Activated CD4-positive, alpha-beta T cell treated with anti-CD3 and anti-CD28 coated beads for 36 hours (primary cell): ENCODE measurements at regions of chr6 and their contacts with region 1.

Region 1: DNA sequence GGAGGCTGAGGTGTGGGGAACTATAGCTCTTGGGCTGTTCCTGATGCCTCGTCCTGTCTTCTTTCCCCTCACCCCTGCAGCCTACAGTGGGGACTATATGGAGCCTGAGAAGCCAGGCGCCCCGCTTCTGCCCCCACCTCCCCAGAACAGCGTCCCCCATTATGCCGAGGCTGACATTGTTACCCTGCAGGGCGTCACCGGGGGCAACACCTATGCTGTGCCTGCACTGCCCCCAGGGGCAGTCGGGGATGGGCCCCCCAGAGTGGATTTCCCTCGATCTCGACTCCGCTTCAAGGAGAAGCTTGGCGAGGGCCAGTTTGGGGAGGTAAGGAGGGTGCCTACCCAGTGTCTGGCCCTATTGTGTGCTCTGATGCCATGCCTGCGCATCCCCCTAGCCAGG is 11.5 kb upstream of the GTF2H4 start:
- DNase-seq: no peak
- ATAC-seq: no peak
- H3K4me3 Mint-ChIP-seq: no peak overlapping the region
- H3K27ac Mint-ChIP-seq: no peak overlapping the region
- H3K4me1 Mint-ChIP-seq: peaks cover 3% of the 10 kb centered on the region
- H3K27me3 Mint-ChIP-seq: no peaks in the 10 kb centered on the region

Region 2: DNA sequence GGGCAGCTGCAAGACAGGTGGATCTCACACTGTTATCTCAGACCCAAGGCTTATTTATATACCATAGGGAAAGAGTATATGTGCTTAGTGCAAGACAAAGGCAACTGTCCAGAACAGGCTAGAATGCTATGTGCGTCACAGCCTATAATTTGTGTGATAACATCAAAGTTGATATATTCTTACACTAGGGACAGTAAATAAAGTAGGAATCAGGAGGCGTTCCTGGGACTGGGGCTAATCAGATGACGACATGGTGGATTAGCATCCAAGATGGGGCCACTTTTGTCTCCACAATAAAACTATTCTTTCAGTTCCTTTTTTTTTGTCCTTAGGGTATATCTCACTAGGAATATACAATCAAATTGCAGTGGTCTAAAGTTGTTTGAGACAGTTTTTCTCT is 97.3 kb before region 1 on chr6:
- CTCF ChIA-PET with region 1: no interaction called
- POLR2A ChIA-PET with region 1: no interaction called
- intact Hi-C with region 1: no loop called
- DNase-seq: no peak
- ATAC-seq: no peak
- H3K4me3 Mint-ChIP-seq: no peak overlapping the region
- H3K27ac Mint-ChIP-seq: no peak overlapping the region
- H3K4me1 Mint-ChIP-seq: peaks cover 26% of the 10 kb centered on the region
- H3K27me3 Mint-ChIP-seq: no peaks in the 10 kb centered on the region

Region 3: GRCh38 chr6:30907758-30908591 is 11.4 kb after region 1 on chr6 and contains the start of gene GTF2H4:
- CTCF ChIA-PET with region 1: interaction called, 3 read pairs
- POLR2A ChIA-PET with region 1: interaction called, 10 read pairs
- intact Hi-C with region 1: no loop called
- DNase-seq: peak; percentile 96
- ATAC-seq: peak; percentile 99
- H3K4me3 Mint-ChIP-seq: peak within 1 kb of the TSS; percentile 95
- H3K27ac Mint-ChIP-seq: peak within 1 kb of the TSS; percentile 86
- H3K4me1 Mint-ChIP-seq: peaks cover 17% of the 10 kb centered on the region
- H3K27me3 Mint-ChIP-seq: no peaks in the 10 kb centered on the region
- total RNA-seq, gene GTF2H4: 35.9 to 40.9 TPM